ENCODE measurements at regions of chr1 and their contacts with region 1.

Region 1: GRCh38 chr1:151968058-151968457 is 25.6 kb downstream of the S100A10 start:
- DNase-seq: peak in 2 of 3 donors; percentile 59 to 65
- H3K4me3 ChIP-seq: no peak overlapping the region
- H3K4me3 Mint-ChIP-seq: peak overlapping the region in 1 of 2 donors; percentile 30
- H3K27ac ChIP-seq: no peak overlapping the region
- H3K27ac Mint-ChIP-seq: peak overlapping the region in 1 of 7 donors; percentile 27
- H3K4me1 ChIP-seq: peaks cover 31 to 35% of the 10 kb centered on the region in 2 donors
- H3K4me1 Mint-ChIP-seq: peaks cover 34% of the 10 kb centered on the region
- H3K27me3 ChIP-seq: peaks cover 0 to 2% of the 10 kb centered on the region in 2 donors
- H3K27me3 Mint-ChIP-seq: peaks cover 0 to 5% (median 3%) of the 10 kb centered on the region in 3 donors
- CTCF ChIP-seq: peak; percentile 80

Region 2: DNA sequence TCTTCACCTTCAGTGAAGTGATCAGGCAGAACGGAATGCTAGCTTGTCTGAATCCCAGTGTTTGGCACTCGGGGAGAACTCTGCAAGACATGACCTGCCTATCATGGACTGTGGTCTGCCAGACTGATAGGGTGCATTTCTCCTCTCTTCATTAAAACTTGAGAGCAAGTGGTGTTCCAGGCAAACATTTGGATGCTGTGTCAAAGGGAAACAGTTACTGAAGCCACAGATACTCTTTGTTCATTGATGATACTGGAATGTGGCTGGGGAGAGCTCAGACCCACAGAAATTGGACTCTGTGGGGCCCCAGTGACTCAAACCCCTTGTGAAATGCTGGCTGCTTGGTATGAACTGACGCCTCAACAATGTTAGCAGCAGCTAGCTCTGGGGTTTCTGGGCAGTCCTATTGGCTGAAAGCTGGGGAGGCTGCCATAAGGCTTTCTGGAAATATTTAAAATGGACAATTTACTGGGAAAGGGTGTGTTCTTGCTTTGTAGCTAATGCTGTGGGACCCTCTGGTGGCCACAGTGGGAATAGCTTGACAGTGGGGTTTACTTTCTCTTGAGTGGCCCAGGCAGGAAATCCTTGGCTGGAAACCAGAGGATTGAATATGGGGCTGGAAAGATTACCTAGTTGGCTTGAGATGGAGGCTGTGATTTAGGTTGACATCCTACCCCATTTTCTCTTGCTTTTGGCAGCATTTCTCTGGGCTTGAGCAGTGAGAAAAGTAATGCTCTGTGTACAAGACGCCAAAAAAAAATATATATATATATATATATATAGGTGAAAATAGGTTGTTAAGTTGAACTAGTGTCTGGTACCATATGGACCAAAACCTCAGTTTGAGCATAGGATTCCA is 33.6 kb after region 1 on chr1:
- intact Hi-C with region 1: loop called in 1 of 2 experiments (anchors 5 kb)
- DNase-seq: peak; percentile 66 to 82 (median 82)
- H3K4me3 ChIP-seq: peak overlapping the region in 1 of 3 experiments; percentile 2
- H3K4me3 Mint-ChIP-seq: peak overlapping the region in 1 of 2 donors; percentile 9
- H3K27ac ChIP-seq: peak overlapping the region in 1 of 2 donors; percentile 58
- H3K27ac Mint-ChIP-seq: peak overlapping the region; percentile 73 to 87 (median 86)
- H3K4me1 ChIP-seq: peaks cover 21 to 22% of the 10 kb centered on the region in 2 donors
- H3K4me1 Mint-ChIP-seq: peaks cover 28% of the 10 kb centered on the region
- H3K27me3 ChIP-seq: peaks cover 0 to 3% of the 10 kb centered on the region in 2 donors
- H3K27me3 Mint-ChIP-seq: peaks cover 4 to 13% (median 8%) of the 10 kb centered on the region in 3 donors
- CTCF ChIP-seq: peak; percentile 71

Region 3: GRCh38 chr1:152392908-152393307 is 424.9 kb after region 1 on chr1:
- intact Hi-C with region 1: no loop called
- DNase-seq: no peak
- H3K4me3 ChIP-seq: no peak overlapping the region
- H3K4me3 Mint-ChIP-seq: no peak overlapping the region
- H3K27ac ChIP-seq: no peak overlapping the region
- H3K27ac Mint-ChIP-seq: no peak overlapping the region
- H3K4me1 ChIP-seq: no peaks in the 10 kb centered on the region
- H3K4me1 Mint-ChIP-seq: no peaks in the 10 kb centered on the region
- H3K27me3 ChIP-seq: peaks cover 0 to 2% of the 10 kb centered on the region in 2 donors
- H3K27me3 Mint-ChIP-seq: peaks cover 6 to 11% (median 8%) of the 10 kb centered on the region in 3 donors
- CTCF ChIP-seq: no peak

Measured in CD14-positive monocyte (primary cell).